Heart left ventricle (tissue), 16 donors: ENCODE measurements at regions of chr1 and their contacts with region 1.

Region 1: DNA sequence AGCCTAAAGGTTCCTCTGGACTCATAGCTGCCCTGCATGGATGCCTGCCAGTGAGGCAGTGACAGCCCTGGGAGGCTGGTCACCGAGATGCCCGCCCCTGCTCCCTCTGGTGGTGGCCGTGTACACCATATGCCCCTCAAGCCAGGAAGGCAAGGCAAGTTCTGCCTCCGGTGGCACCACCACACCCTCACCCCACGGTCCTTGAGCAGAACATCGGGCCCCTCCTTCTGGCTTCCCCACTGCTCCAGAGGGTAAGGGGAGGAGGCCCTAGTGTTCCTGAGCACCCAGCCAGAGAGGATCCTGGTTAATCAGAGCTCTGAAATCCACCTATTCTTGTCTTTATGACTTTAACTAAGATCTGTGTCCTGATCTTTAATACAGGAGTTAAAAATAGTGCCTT is 1.6 kb upstream of the S100A14 start:
- DNase-seq: peak; percentile 75 to 88 (median 81)
- ATAC-seq: peak; percentile 57 to 82 (median 68)
- H3K4me3 ChIP-seq: no peak overlapping the region
- H3K27ac ChIP-seq: peak overlapping the region in 9 of 12 donors; percentile 35 to 74 (median 63)
- H3K4me1 ChIP-seq: peaks cover 0 to 32% (median 21%) of the 10 kb centered on the region in 12 donors
- H3K27me3 ChIP-seq: no peaks in the 10 kb centered on the region
- CTCF ChIP-seq: peak in 11 of 12 donors; percentile 44 to 87 (median 61)
- POLR2A ChIP-seq: no peak

Region 2: DNA sequence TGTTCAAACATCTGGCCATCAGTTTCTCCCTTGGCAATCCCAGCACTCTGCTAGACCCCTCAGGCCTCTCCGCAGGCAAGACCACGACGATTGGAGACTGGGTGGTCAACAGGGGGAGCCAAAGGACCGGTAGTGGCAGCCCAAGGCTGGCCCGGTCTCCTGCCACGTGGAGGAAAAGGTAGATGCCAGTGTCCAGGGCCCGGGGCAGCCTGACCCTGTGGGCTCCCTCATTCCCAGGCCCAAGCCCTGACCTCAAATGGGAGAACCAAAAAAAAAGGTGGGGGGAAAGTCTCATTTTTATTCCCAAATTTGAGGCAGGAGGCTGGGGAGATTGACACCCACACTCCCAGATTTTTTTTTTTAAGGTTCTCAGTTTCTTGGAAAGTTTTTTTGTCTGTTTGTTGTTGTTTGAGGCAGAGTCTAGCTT is 106.7 kb before region 1 on chr1:
- intact Hi-C with region 1: loop called in 4 of 10 experiments (anchors 2 to 5 kb)
- DNase-seq: peak; percentile 82 to 88 (median 84)
- ATAC-seq: peak; percentile 60 to 62 (median 60)
- H3K4me3 ChIP-seq: no peak overlapping the region
- H3K27ac ChIP-seq: no peak overlapping the region
- H3K4me1 ChIP-seq: peaks cover 0 to 32% (median 21%) of the 10 kb centered on the region in 12 donors
- H3K27me3 ChIP-seq: no peaks in the 10 kb centered on the region
- CTCF ChIP-seq: peak; percentile 81 to 97 (median 90)
- POLR2A ChIP-seq: no peak

Region 3: DNA sequence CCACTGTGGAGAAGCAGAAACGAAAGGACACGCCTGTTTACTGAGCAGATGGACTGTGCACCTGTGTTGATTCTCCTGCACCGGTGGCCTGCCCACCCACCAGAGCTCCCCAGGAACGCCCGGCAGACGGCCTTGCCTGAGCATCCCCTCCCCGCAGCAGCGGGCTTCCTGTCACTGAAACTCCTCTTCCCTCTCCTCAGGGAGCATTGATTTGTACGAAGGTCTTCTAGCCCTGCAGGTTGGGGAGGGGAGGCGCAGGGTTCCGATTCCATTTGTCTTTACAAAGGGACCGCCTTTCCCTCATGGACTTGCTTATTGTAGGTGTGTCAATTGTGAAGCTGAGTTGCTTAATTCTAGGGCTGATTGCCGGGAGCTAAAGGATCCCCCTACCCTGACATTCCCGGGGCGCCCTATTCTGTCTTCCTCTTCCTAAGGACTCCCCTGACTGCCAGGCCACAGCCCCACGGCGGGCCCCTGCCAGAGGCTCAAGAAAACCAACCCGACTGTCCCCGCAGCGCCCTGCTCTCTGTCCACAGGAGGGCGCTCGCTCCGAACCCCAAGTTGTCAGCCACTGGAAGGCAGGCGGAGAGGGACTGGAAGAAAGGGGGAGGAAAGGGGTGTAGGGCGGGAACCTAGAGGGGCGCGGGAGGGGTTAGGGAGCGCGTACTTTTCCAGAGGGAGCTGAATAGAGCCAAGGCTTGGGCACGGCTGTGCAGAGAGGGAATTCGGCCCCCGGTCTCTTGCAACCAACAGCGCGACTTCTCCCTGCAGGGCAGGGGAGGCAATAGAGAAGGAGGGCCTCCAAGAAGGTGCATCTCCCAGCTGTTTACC is 84.7 kb before region 1 on chr1:
- intact Hi-C with region 1: loop called in 2 of 10 experiments (anchors 5 kb)
- DNase-seq: peak; percentile 83 to 91 (median 84)
- ATAC-seq: peak; percentile 35 to 70 (median 52)
- H3K4me3 ChIP-seq: peak overlapping the region in 10 of 12 donors; percentile 14 to 97 (median 90)
- H3K27ac ChIP-seq: peak overlapping the region in 11 of 12 donors; percentile 3 to 100 (median 98)
- H3K4me1 ChIP-seq: peaks cover 0 to 54% (median 28%) of the 10 kb centered on the region in 12 donors
- H3K27me3 ChIP-seq: no peaks in the 10 kb centered on the region
- CTCF ChIP-seq: peak; percentile 63 to 89 (median 80)
- POLR2A ChIP-seq: no peak

Region 4: GRCh38 chr1:153545067-153546055 is 72.3 kb before region 1 on chr1 and contains the start of gene S100A4:
- intact Hi-C with region 1: no loop called
- DNase-seq: peak; percentile 94 to 97 (median 95)
- ATAC-seq: peak; percentile 82 to 93 (median 91)
- H3K4me3 ChIP-seq: peak within 1 kb of the TSS in 11 of 12 donors; percentile 21 to 71 (median 55)
- H3K27ac ChIP-seq: peak within 1 kb of the TSS; percentile 38 to 93 (median 82)
- H3K4me1 ChIP-seq: peaks cover 11 to 100% (median 46%) of the 10 kb centered on the region in 12 donors
- H3K27me3 ChIP-seq: no peaks in the 10 kb centered on the region
- CTCF ChIP-seq: no peak
- POLR2A ChIP-seq: peak in 1 of 2 donors; percentile 60
- total RNA-seq, gene S100A4: 56.9 to 214 (median 96.1) TPM

Region 5: DNA sequence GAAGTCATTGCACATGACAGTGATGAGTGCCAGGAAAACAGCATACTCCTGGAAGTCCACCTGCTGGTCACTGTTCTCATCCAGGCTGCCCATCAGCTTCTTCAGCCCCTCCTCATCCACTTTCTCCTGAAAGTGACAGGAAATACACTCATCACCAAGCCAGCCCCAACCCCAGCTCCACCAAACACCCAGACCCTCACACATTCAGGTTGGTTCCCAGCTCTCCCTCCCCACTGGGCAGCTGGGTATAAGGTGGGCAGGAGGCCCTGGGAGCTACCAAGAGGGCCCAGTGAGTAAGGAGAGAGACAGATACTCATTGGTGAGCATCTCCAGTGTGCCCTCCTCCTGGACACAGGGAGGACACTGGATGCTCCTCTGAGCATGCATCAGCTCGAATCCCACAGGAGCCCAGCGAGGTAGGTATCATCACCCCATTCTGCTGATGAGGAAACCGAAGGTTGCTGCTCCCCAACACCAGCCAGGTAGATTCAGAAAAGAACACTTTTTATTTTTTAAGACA is 56.1 kb before region 1 on chr1:
- intact Hi-C with region 1: no loop called
- DNase-seq: no peak
- ATAC-seq: no peak
- H3K4me3 ChIP-seq: no peak overlapping the region
- H3K27ac ChIP-seq: peak overlapping the region in 1 of 12 donors; percentile 43
- H3K4me1 ChIP-seq: peaks cover 5 to 27% (median 13%) of the 10 kb centered on the region in 12 donors
- H3K27me3 ChIP-seq: no peaks in the 10 kb centered on the region
- CTCF ChIP-seq: no peak
- POLR2A ChIP-seq: no peak

Region 6: DNA sequence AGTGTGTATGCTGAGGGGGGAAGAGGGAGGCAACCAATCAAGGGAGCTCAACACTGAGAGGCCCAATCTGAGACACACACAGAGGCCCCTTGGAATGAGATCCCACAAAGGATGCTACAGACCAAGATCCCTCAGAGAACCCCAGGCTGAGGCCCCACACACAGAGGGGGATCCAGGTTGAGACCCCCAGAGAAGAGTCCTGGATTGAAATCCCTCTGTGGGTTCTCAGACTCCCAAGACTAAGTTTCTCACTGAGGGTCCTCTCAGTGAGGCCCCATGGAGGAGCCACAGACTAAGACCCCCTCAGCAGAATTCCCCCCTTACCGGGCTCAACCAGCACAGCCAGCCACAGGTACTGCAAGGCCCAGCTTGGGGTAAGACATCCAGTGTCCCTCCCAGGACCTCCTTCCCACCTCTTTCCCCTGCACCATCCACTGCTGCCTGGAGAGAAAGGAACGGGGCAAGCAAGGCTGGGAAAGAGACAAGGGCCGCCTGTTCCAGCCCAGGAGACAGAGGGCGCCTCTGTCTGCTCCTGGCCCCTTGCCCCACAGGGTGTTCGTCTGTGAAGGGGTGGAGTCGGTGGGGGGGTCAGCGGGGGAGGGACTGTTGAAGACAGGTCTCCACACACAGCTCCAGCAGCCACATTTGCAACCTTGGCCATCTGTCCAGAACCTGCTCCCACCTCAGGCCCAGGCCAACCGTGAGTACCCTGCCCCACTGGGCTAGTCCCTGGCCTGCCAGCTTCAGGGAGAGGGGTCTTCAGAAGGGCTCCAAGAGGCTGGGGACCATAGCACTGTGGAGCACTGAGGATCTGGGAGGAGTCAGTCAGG is 10.3 kb after region 1 on chr1 and contains the start of gene S100A1:
- intact Hi-C with region 1: loop called in 1 of 10 experiments (anchors 2 kb)
- DNase-seq: peak; percentile 77 to 87 (median 82)
- ATAC-seq: peak; percentile 45 to 72 (median 58)
- H3K4me3 ChIP-seq: peak within 1 kb of the TSS; percentile 38 to 87 (median 62)
- H3K27ac ChIP-seq: peak within 1 kb of the TSS; percentile 84 to 97 (median 94)
- H3K4me1 ChIP-seq: peaks cover 2 to 72% (median 49%) of the 10 kb centered on the region in 12 donors
- H3K27me3 ChIP-seq: no peaks in the 10 kb centered on the region
- CTCF ChIP-seq: peak in 2 of 12 donors; percentile 29 to 31
- POLR2A ChIP-seq: no peak
- total RNA-seq, gene S100A1: 1,023 to 2,291 (median 2,114) TPM